ENCODE measurements at regions of chr10 and their contacts with region 1.

Region 1: GRCh38 chr10:100670828-100671479 is 74.4 kb upstream of the PAX2 start:
- DNase-seq: peak; percentile 92
- H3K4me3 ChIP-seq: peak overlapping the region; percentile 6 to 51; a peak in 1 of 4 replicates
- H3K27ac ChIP-seq: no peak overlapping the region
- H3K4me1 ChIP-seq: no peaks in the 10 kb centered on the region; a peak in 1 of 4 replicates
- H3K27me3 ChIP-seq: peaks cover 30% of the 10 kb centered on the region
- CTCF ChIP-seq: peak; percentile 70
- EP300 ChIP-seq: no peak
- RAD21 ChIP-seq: peak; percentile 54

Region 2: DNA sequence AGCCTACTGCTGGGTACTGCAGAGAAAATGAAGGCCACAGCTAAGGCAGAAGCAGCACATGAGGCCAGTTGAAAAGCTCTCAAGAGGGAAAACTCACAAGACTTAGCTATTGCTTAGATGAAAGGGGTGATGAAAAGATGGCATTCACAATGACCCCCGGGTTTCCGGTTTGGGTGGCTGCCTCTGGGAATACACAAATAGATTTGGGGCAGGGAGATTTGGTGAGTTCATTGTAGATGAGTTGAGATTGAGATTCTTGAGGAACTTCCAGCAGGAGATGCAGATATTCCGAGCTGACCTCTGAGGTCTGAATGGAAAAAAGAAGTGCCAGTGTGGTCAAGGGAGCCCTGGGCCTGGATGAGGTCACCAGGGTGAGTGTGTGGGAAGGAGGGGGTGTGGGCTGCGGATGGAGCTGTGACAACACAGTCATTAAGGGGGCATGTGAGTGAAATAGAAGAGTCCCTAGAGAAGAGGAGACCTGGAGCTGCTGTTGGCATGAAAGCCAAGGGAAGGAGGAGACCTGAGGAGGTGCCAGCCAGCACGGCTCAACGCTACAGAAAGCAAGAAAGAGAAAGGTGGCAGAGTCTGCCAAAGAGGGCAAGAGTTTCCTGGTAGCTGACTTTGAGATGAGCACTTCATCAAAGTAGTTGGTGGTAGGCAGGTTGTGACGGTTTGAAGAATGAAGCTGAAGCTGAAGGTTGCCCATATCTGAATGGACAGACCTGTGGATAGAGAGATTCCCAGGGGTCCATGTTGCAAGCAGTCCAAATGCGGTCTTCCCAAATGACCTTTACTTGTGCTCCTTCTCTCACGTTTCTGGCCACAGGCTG is 91.5 kb before region 1 on chr10:
- CTCF ChIA-PET with region 1: no interaction called
- POLR2A ChIA-PET with region 1: no interaction called
- DNase-seq: no peak
- H3K4me3 ChIP-seq: no peak overlapping the region
- H3K27ac ChIP-seq: no peak overlapping the region
- H3K4me1 ChIP-seq: no peaks in the 10 kb centered on the region
- H3K27me3 ChIP-seq: peaks cover 46% of the 10 kb centered on the region
- CTCF ChIP-seq: no peak
- EP300 ChIP-seq: no peak
- RAD21 ChIP-seq: no peak

Region 3: GRCh38 chr10:100710151-100710871 is 39.4 kb after region 1 on chr10:
- CTCF ChIA-PET with region 1: interaction called, 14 read pairs
- POLR2A ChIA-PET with region 1: no interaction called
- DNase-seq: peak; percentile 90
- H3K4me3 ChIP-seq: peak overlapping the region in 1 of 2 experiments; percentile 29; a peak in 2 of 4 replicates
- H3K27ac ChIP-seq: peak overlapping the region in 1 of 2 experiments; percentile 45; a peak in 2 of 4 replicates
- H3K4me1 ChIP-seq: peaks cover 0 to 49% of the 10 kb centered on the region in 2 experiments; a peak in 2 of 4 replicates
- H3K27me3 ChIP-seq: peaks cover 38% of the 10 kb centered on the region
- CTCF ChIP-seq: no peak
- EP300 ChIP-seq: peak in 1 of 2 experiments; percentile 17; a peak in 1 of 4 replicates
- RAD21 ChIP-seq: no peak